PC-3 (cell line): ENCODE measurements at regions of chr20 and their contacts with region 1.

Region 1: GRCh38 chr20:59908855-59909254 is 24.6 kb downstream of the SYCP2 start:
- DNase-seq: peak; percentile 58
- ATAC-seq: peak; percentile 88
- H3K4me3 ChIP-seq: no peak overlapping the region
- H3K27ac ChIP-seq: no peak overlapping the region
- H3K4me1 ChIP-seq: peaks cover 22% of the 10 kb centered on the region
- H3K27me3 ChIP-seq: no peaks in the 10 kb centered on the region
- CTCF ChIP-seq: no peak

Region 2: DNA sequence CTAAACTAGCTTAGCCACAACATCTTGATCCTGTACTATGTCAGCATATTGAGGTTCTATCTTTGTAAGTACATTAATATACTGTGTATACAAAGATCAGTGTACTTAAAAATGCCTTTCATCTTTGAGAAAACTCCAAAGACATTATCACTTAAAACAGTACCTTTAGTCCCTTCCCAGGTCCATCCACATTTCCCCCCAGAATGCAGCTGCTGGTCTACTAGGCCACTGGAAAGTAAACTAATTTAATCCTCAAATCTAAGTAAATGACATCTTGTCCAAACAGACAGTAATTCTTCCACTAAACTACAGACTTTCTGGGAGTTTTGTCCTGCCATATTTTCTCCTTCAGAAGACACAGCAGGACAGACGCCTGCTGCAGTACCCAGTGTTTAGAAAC is 44.1 kb before region 1 on chr20:
- CTCF ChIA-PET with region 1: no interaction called
- POLR2A ChIA-PET with region 1: no interaction called
- intact Hi-C with region 1: loop called (anchors 5 kb)
- DNase-seq: no peak
- ATAC-seq: no peak
- H3K4me3 ChIP-seq: no peak overlapping the region
- H3K27ac ChIP-seq: no peak overlapping the region
- H3K4me1 ChIP-seq: no peaks in the 10 kb centered on the region
- H3K27me3 ChIP-seq: no peaks in the 10 kb centered on the region
- CTCF ChIP-seq: no peak

Region 3: DNA sequence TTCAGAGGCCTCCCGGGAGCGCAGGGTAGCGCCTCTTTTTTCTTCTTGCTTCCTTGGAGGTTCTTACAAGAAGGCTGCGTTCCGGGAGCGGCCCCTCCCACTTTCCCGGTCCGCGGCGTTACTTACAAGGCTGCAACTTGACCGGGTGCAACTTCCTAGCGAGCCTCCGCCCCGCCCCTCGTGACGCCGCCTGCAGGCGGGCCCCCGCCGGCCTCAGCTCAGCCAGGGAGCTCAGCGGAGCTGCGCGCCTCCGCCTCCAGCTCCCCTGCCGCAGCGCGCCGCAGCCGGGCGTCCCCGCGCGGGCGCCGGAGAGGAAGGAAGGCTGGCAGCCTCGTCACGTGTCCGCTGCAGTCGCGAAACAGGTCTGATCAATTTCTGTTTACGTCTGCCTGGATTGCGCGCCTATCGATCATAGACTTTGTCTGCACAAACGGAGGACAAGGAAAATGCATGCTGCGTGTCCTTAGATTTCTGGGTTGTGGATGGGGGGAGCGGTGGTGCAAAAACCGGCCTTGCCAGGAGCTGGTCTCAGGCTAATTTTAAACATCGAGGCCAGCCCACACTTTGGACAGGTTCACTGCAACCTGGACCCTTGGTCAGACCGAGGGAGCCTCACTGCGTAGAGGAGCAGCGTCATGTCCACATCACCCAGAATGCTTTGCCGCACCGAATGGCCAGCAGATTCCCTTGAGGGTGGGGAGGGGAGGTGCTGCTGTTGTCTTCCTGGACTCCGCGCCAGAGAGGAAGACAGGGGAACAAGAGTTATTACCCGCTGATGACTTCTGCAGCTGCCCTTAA is 31.5 kb after region 1 on chr20 and contains the starts of genes FAM217B and PPP1R3D:
- CTCF ChIA-PET with region 1: no interaction called
- POLR2A ChIA-PET with region 1: no interaction called
- intact Hi-C with region 1: no loop called
- DNase-seq: peak; percentile 96
- ATAC-seq: peak; percentile 90
- H3K4me3 ChIP-seq: peak within 1 kb of the TSS; percentile 72
- H3K27ac ChIP-seq: peak within 1 kb of the TSS; percentile 73
- H3K4me1 ChIP-seq: peaks cover 36% of the 10 kb centered on the region
- H3K27me3 ChIP-seq: no peaks in the 10 kb centered on the region
- CTCF ChIP-seq: no peak
- total RNA-seq, gene FAM217B: 6.3 and 7.2 TPM in 2 replicates
- total RNA-seq, gene PPP1R3D: 5.6 and 6.3 TPM in 2 replicates